SK-N-SH (cell line): ENCODE measurements at regions of chr6 and their contacts with region 1.

Region 1: DNA sequence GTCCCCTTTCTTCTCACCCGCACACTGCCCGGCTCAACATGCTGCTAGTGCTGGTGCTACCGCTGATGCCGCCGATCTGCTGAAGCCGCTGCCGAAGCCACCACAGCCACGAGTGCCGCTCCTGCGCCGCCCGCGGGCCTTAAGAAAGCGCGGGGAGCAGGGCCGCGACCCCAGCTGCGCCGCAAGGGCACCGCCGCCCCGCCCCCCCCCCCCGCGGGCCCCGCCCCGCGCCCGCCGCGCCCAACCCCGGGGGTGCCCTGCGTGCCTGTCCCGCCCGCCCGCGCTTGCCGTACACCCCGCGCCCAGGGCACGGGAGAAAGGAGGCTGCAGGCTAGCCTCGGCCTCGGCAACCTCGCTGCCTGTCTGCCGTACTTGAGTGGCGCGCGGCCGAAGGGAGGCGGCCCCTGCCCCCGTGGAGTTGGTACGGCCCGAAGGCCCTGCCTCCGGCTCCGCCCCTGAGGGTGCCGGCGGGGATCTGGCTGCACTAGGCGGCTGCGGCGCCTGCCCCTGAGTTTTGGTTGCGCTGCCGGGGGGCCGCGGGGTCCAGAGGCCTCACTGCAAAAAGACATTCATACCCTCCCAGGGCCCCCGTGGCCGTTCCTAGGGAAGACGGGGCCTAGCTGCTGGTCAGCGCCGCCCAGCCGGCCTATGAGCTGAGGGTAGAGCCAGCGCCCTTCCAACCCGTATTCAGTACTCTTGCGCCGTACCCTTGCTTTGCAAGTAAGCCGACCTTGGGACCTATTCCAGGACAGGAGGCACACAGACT is at the start of gene SOD2:
- DNase-seq: peak; percentile 93
- H3K4me3 ChIP-seq: peak within 1 kb of the TSS; percentile 74 to 80
- H3K27ac ChIP-seq: peak within 1 kb of the TSS; percentile 68 to 91
- H3K4me1 ChIP-seq: peaks cover 5 to 10% of the 10 kb centered on the region in 2 experiments; a peak in 3 of 4 replicates
- H3K27me3 ChIP-seq: no peaks in the 10 kb centered on the region
- CTCF ChIP-seq: no peak
- EP300 ChIP-seq: 0 out of 4 replicates have a peak, but pooled peaks of 1 of the 2 experiments have one; percentile 18
- RAD21 ChIP-seq: no peak
- polyA plus RNA-seq, gene SOD2: 26.8 and 29.0 TPM in 2 replicates

Region 2: GRCh38 chr6:159679091-159680077 is 13.9 kb before region 1 on chr6:
- CTCF ChIA-PET with region 1: interaction called, 24 read pairs
- POLR2A ChIA-PET with region 1: no interaction called
- DNase-seq: no peak
- H3K4me3 ChIP-seq: no peak overlapping the region
- H3K27ac ChIP-seq: no peak overlapping the region
- H3K4me1 ChIP-seq: no peaks in the 10 kb centered on the region
- H3K27me3 ChIP-seq: no peaks in the 10 kb centered on the region
- CTCF ChIP-seq: no peak
- EP300 ChIP-seq: no peak
- RAD21 ChIP-seq: no peak

Region 3: DNA sequence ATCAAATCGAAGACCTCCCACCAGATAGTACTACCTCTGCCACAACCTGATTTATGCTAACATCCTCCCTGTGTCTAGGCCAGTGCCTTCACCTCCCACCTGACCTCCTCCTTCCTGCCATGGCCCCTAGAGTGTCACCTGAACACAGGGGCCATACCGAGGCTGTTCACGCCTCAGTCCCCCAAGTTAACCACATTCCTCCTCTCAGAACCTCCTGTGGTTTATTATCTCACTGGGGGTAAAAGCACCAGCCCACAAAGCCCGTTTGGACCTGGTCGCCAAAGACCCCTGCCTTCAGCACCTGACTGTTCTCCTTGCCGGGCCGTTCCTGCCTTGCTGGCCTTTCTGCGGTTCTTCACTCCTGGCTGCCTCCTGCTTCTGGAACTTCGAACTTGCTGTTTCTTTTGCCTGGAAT is 211.2 kb after region 1 on chr6:
- CTCF ChIA-PET with region 1: no interaction called
- POLR2A ChIA-PET with region 1: no interaction called
- DNase-seq: no peak
- H3K4me3 ChIP-seq: no peak overlapping the region
- H3K27ac ChIP-seq: no peak overlapping the region
- H3K4me1 ChIP-seq: peaks cover 0 to 11% of the 10 kb centered on the region in 2 experiments; a peak in 1 of 4 replicates
- H3K27me3 ChIP-seq: no peaks in the 10 kb centered on the region; the same call in 1 of the 2 replicates
- CTCF ChIP-seq: no peak
- EP300 ChIP-seq: no peak
- RAD21 ChIP-seq: no peak

Region 4: DNA sequence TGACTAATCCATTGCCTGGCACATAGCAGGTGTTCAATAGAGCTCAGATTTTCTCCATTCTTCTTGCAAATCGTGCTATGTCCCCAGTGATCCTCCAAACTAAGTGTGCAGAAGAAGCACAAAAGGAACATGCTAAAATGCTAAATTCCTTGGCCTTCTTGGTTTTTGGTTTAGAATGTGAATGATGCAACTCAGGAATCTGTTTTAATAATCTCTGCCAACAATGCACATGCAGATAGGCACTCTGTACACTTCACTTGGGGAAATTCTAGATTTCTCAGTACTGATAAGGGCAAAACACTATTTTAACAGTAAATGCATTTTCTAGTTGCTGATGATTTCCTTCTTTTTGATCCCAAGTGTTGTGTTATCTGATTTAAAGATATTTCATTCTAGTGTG is 463.5 kb after region 1 on chr6:
- CTCF ChIA-PET with region 1: no interaction called
- POLR2A ChIA-PET with region 1: no interaction called
- DNase-seq: no peak
- H3K4me3 ChIP-seq: no peak overlapping the region
- H3K27ac ChIP-seq: no peak overlapping the region
- H3K4me1 ChIP-seq: peaks cover 0 to 8% of the 10 kb centered on the region in 2 experiments; a peak in 1 of 4 replicates
- H3K27me3 ChIP-seq: no peaks in the 10 kb centered on the region
- CTCF ChIP-seq: no peak
- EP300 ChIP-seq: no peak
- RAD21 ChIP-seq: no peak

Region 5: DNA sequence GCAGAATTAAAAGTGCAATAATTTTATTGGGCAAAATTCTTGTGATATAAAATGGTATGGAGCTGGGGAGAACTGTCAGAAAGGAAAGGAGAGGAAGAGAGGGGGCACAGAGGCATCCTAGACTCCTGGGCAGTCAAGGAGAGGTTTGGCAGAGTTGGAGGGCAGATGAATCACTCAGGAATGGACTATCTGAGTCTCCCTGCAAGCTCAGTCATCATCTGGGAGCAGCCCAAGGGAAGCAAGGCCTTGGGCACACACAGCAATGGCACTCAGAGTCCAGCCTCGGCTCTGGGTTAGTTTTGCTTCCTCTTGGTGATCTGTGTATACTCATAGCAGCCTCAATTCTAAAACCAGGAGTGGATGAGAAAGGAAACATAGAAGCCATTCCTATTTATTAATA is 495.5 kb after region 1 on chr6:
- CTCF ChIA-PET with region 1: no interaction called
- POLR2A ChIA-PET with region 1: no interaction called
- DNase-seq: no peak
- H3K4me3 ChIP-seq: no peak overlapping the region
- H3K27ac ChIP-seq: no peak overlapping the region
- H3K4me1 ChIP-seq: no peaks in the 10 kb centered on the region
- H3K27me3 ChIP-seq: no peaks in the 10 kb centered on the region
- CTCF ChIP-seq: no peak
- EP300 ChIP-seq: no peak
- RAD21 ChIP-seq: no peak